T-cell (primary cell): ENCODE measurements at regions of chr3 and their contacts with region 1.

Region 1: DNA sequence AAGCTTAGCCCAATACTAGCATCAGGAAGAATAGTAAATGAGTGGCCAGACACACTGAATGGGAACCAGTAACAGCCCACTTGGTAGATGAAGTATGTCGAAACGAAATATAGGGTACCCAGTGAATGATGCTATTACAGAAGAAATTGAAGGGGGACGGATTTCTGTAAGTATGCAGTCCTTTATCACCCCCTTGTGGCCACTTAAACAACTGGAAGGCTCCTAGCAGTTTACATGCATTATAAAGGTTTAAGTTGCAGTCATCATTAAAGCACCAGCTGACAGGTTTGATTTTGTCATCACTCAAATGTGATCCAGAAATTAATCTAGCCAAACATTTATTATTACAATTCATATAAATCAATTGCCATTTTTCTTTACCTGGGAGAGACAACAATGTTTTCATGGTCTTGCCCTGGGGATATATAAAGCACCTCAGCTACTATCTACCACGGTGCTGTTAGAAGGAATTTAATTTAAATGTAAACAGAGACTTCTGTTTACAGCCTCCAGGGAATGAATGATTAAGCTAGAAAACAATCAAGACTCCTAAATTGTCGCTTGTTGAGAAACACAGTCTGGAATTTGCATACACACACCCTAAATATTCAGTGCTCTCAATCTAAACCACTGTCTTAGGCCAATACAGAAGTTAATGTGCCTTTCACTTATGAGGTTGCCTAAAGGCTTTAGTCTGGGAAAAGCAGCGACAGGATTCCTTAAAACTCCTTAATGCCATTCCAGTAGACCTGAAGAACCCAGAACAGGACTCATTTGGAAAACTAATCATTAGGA is 7.8 kb downstream of the EIF1B start:
- DNase-seq: peak in 29 of 35 experiments; percentile 9 to 82 (median 28)
- ATAC-seq: peak; percentile 78 to 87 (median 78)
- H3K4me3 ChIP-seq: no peak overlapping the region
- H3K4me3 Mint-ChIP-seq: no peak overlapping the region
- H3K27ac ChIP-seq: no peak overlapping the region
- H3K27ac Mint-ChIP-seq: no peak overlapping the region
- H3K4me1 ChIP-seq: peaks cover 0 to 4% of the 10 kb centered on the region in 2 experiments
- H3K4me1 Mint-ChIP-seq: peaks cover 7 to 10% (median 9%) of the 10 kb centered on the region in 3 donors
- H3K27me3 ChIP-seq: no peaks in the 10 kb centered on the region
- H3K27me3 Mint-ChIP-seq: no peaks in the 10 kb centered on the region

Region 2: DNA sequence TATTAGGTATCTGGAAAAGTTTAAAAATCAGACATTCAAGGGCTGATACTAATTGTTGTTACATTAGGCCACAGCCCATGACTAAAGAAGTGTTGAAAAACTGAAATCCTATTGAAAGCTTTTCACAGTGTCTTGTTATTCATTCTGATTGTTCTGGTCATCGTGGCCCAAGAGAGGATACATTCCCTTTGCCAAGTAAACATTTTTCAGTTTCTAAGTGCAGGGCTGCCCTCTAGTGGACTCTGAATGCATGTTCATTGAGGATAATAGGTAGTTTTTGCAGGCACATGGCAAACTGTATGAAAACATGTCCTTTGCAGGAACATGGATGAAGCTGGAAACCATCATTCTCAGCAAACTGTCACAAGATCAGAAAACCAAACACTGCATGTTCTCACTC is 326.7 kb before region 1 on chr3:
- CTCF ChIA-PET with region 1: no interaction called
- POLR2A ChIA-PET with region 1: interaction called in 1 of 2 experiments, 11 read pairs
- DNase-seq: peak in 1 of 35 experiments; percentile 13
- ATAC-seq: no peak
- H3K4me3 ChIP-seq: no peak overlapping the region
- H3K4me3 Mint-ChIP-seq: no peak overlapping the region
- H3K27ac ChIP-seq: no peak overlapping the region
- H3K27ac Mint-ChIP-seq: no peak overlapping the region
- H3K4me1 ChIP-seq: no peaks in the 10 kb centered on the region
- H3K4me1 Mint-ChIP-seq: no peaks in the 10 kb centered on the region
- H3K27me3 ChIP-seq: peaks cover 0 to 4% of the 10 kb centered on the region in 2 experiments
- H3K27me3 Mint-ChIP-seq: peaks cover 10 to 17% of the 10 kb centered on the region in 2 donors

Region 3: GRCh38 chr3:40191850-40192448 is 125.3 kb before region 1 on chr3:
- CTCF ChIA-PET with region 1: interaction called, 25 to 32 read pairs
- POLR2A ChIA-PET with region 1: no interaction called
- DNase-seq: peak in 31 of 35 experiments; percentile 10 to 72 (median 41)
- ATAC-seq: peak in 2 of 4 experiments; percentile 61 to 73
- H3K4me3 ChIP-seq: no peak overlapping the region
- H3K4me3 Mint-ChIP-seq: no peak overlapping the region
- H3K27ac ChIP-seq: no peak overlapping the region
- H3K27ac Mint-ChIP-seq: no peak overlapping the region
- H3K4me1 ChIP-seq: no peaks in the 10 kb centered on the region
- H3K4me1 Mint-ChIP-seq: no peaks in the 10 kb centered on the region
- H3K27me3 ChIP-seq: peaks cover 0 to 3% of the 10 kb centered on the region in 2 experiments
- H3K27me3 Mint-ChIP-seq: no peaks in the 10 kb centered on the region

Region 4: DNA sequence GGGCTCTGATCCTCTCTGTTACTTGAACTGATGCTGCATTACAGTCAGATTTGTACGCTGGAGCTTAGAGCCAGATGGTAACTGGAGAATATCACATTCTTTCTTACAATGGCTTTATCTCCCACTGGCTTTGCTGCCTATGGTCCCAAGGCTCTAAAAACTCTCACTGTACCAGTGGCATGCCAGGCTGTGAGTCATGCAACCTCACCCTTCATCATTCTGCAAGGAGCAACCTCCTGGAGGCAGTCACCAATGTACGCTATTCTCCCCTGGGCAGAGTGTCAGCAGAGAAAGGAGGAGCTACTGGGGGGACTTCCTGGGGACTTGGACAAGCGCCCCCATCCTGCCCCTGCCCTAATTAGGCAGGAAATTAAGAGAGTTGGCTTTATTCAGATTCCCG is 105.7 kb before region 1 on chr3:
- CTCF ChIA-PET with region 1: no interaction called
- POLR2A ChIA-PET with region 1: no interaction called
- DNase-seq: no peak
- ATAC-seq: no peak
- H3K4me3 ChIP-seq: no peak overlapping the region
- H3K4me3 Mint-ChIP-seq: no peak overlapping the region
- H3K27ac ChIP-seq: no peak overlapping the region
- H3K27ac Mint-ChIP-seq: no peak overlapping the region
- H3K4me1 ChIP-seq: no peaks in the 10 kb centered on the region
- H3K4me1 Mint-ChIP-seq: no peaks in the 10 kb centered on the region
- H3K27me3 ChIP-seq: no peaks in the 10 kb centered on the region
- H3K27me3 Mint-ChIP-seq: no peaks in the 10 kb centered on the region

Region 5: GRCh38 chr3:40328374-40328773 is 11.1 kb after region 1 on chr3:
- CTCF ChIA-PET with region 1: interaction called in 1 of 2 experiments, 10 read pairs
- POLR2A ChIA-PET with region 1: interaction called in 1 of 2 experiments, 5 read pairs
- DNase-seq: no peak
- ATAC-seq: no peak
- H3K4me3 ChIP-seq: no peak overlapping the region
- H3K4me3 Mint-ChIP-seq: no peak overlapping the region
- H3K27ac ChIP-seq: no peak overlapping the region
- H3K27ac Mint-ChIP-seq: no peak overlapping the region
- H3K4me1 ChIP-seq: no peaks in the 10 kb centered on the region
- H3K4me1 Mint-ChIP-seq: peaks cover 0 to 4% (median 4%) of the 10 kb centered on the region in 3 donors
- H3K27me3 ChIP-seq: no peaks in the 10 kb centered on the region
- H3K27me3 Mint-ChIP-seq: peaks cover 0 to 4% of the 10 kb centered on the region in 2 donors

Region 6: GRCh38 chr3:41482134-41482533 is 1164.9 kb after region 1 on chr3:
- CTCF ChIA-PET with region 1: no interaction called
- POLR2A ChIA-PET with region 1: no interaction called
- DNase-seq: no peak
- ATAC-seq: no peak
- H3K4me3 ChIP-seq: no peak overlapping the region
- H3K4me3 Mint-ChIP-seq: no peak overlapping the region
- H3K27ac ChIP-seq: no peak overlapping the region
- H3K27ac Mint-ChIP-seq: no peak overlapping the region
- H3K4me1 ChIP-seq: no peaks in the 10 kb centered on the region
- H3K4me1 Mint-ChIP-seq: no peaks in the 10 kb centered on the region
- H3K27me3 ChIP-seq: no peaks in the 10 kb centered on the region
- H3K27me3 Mint-ChIP-seq: no peaks in the 10 kb centered on the region